Activated CD8-positive, alpha-beta memory T cell treated with anti-CD3 and anti-CD28 coated beads, Interleukin-2, amount 10 ng/mL, durations not matched to agents 7 days and 5 days (primary cell): ENCODE measurements at regions of chr2 and their contacts with region 1.

Region 1: DNA sequence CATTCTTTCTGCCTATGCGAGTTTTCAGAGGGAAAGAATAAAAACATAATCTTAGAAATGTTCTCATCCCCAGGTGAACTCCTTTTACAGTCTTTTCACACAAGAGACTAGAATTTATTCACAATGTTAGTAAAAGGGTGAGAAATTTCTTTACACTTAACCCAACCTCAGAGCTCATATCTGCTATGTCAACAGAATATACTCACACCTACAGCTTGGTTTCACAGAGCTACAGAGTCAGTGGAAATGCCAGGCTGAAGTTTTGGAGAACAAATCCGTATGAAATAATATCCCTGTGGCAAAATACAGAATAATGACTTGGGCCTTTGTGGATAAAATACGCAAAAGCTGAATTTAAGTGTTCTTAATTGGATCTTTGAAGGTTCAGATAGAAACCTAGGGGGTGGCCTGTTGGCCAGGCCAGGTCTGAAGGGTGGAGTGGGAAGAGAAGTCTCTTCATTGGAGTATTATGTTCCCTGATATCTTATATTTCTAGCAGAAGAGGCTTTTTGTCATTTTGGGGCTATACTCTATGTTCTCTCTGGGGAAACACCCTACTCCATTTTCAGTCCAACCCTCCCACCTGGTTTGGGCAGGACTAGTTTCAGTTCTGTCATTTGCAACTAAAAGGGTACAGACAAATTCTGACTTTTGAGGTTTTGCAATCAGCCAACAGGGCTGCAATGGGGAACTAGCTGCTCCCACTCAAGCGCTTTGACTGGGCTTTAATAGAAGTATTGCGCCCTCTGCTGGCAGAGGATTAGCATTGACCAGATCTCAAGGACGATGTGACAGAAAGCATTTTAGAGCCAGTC is 25.7 kb downstream of the FBXO48 start:
- DNase-seq: peak; percentile 94
- ATAC-seq: peak; percentile 96
- H3K4me3 Mint-ChIP-seq: no peak overlapping the region
- H3K27ac Mint-ChIP-seq: peak overlapping the region; percentile 84
- H3K4me1 Mint-ChIP-seq: peaks cover 23% of the 10 kb centered on the region
- H3K27me3 Mint-ChIP-seq: peaks cover 6% of the 10 kb centered on the region

Region 2: GRCh38 chr2:68295516-68295915 is 145.9 kb before region 1 on chr2:
- CTCF ChIA-PET with region 1: interaction called, 14 read pairs
- DNase-seq: no peak
- ATAC-seq: no peak
- H3K4me3 Mint-ChIP-seq: no peak overlapping the region
- H3K27ac Mint-ChIP-seq: no peak overlapping the region
- H3K4me1 Mint-ChIP-seq: peaks cover 5% of the 10 kb centered on the region
- H3K27me3 Mint-ChIP-seq: peaks cover 15% of the 10 kb centered on the region

Region 3: GRCh38 chr2:68362069-68362468 is 79.3 kb before region 1 on chr2:
- CTCF ChIA-PET with region 1: interaction called, 77 read pairs
- DNase-seq: peak; percentile 87
- ATAC-seq: peak; percentile 81
- H3K4me3 Mint-ChIP-seq: peak overlapping the region; percentile 48
- H3K27ac Mint-ChIP-seq: peak overlapping the region; percentile 79
- H3K4me1 Mint-ChIP-seq: peaks cover 38% of the 10 kb centered on the region
- H3K27me3 Mint-ChIP-seq: no peaks in the 10 kb centered on the region

Region 4: GRCh38 chr2:68371581-68371980 is 69.8 kb before region 1 on chr2:
- CTCF ChIA-PET with region 1: interaction called, 18 read pairs
- DNase-seq: no peak
- ATAC-seq: peak; percentile 82
- H3K4me3 Mint-ChIP-seq: peak overlapping the region; percentile 17
- H3K27ac Mint-ChIP-seq: peak overlapping the region; percentile 38
- H3K4me1 Mint-ChIP-seq: peaks cover 63% of the 10 kb centered on the region
- H3K27me3 Mint-ChIP-seq: no peaks in the 10 kb centered on the region

Region 5: DNA sequence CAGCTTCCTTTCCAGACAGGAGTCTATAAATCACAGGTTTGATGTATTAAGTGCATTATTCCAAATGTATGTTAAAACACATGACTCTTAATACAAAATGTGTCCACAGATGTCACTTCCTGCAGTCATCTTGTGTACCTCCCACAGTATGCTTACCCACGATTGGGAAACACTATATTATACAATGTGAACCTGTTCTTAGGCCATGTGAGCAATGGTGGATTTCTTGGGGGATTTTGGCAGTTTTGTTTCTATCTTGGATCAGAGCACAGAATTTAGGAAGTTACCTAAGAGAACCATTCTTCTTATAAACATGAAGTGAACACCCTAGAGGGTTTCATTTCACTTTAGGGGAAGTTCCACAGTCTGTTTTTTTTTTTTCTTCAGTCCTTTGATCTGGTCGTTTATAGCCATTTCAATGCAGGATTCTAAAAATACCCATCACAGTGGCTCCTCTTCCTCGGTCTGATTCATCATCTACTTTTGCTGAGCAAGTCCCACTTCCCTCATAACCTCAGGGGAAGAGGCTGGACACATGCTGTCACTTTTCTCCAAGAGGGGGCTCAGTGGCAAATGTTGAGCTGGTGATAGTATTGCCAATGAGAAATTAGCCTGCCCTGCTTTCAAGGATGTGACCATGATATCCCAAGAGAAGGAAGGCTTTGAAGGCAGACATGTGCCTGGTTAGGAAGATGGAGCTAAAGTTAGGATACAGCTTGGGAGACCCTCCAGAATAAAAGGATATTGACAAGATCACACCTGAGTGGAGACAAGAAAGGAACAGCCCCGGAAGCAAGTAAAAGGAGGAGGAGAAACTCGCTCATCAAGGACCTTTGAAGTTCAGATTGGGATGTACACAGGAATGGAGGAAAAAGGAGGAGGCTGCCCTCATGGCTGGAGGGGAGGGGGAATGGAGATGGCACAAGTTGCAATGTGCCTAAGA is 53.7 kb before region 1 on chr2:
- CTCF ChIA-PET with region 1: interaction called, 11 read pairs
- DNase-seq: no peak
- ATAC-seq: peak; percentile 33
- H3K4me3 Mint-ChIP-seq: peak overlapping the region; percentile 17
- H3K27ac Mint-ChIP-seq: peak overlapping the region; percentile 81
- H3K4me1 Mint-ChIP-seq: peaks cover 56% of the 10 kb centered on the region
- H3K27me3 Mint-ChIP-seq: peaks cover 3% of the 10 kb centered on the region

Region 6: DNA sequence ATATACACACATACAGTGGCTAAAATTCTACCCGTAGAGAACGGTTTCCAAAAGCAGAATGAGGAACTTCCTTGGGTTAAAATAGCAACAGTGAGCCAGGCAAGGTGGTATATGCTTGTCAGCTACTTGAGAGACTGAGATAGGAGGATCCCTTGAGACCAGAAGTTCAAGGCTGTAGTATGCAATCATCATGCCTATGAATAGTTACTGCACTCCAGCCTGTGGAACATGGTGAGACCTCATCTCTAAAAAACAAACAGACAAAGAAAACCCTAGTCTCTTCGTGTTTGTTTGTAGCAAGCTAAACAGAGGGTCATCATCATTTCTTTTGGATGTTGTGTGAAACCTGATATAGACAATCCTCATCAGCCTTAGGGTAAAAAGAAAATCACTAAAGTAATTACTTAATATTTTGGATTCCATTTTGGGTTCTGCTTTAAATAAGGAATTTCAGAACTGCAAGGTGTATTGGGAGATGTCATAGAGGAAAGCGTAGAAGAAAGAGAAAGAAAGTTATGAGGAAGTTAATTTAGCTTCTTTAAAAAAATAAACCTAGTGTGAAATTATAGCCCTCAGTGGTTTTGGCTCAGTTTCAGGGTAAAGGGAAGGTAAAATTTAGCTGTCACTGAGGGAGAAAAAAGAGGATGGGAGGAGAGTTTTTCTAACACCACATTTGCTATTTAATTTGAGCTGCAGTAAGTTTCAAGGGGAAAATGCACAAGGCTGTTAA is 29.8 kb before region 1 on chr2:
- CTCF ChIA-PET with region 1: interaction called, 14 read pairs
- DNase-seq: no peak
- ATAC-seq: no peak
- H3K4me3 Mint-ChIP-seq: peak overlapping the region; percentile 8
- H3K27ac Mint-ChIP-seq: peak overlapping the region; percentile 58
- H3K4me1 Mint-ChIP-seq: peaks cover 23% of the 10 kb centered on the region
- H3K27me3 Mint-ChIP-seq: peaks cover 5% of the 10 kb centered on the region

Region 7: GRCh38 chr2:68423966-68424650 is 17.3 kb before region 1 on chr2:
- CTCF ChIA-PET with region 1: interaction called, 44 read pairs
- DNase-seq: no peak
- ATAC-seq: peak; percentile 85
- H3K4me3 Mint-ChIP-seq: no peak overlapping the region
- H3K27ac Mint-ChIP-seq: no peak overlapping the region
- H3K4me1 Mint-ChIP-seq: peaks cover 42% of the 10 kb centered on the region
- H3K27me3 Mint-ChIP-seq: no peaks in the 10 kb centered on the region

Region 8: GRCh38 chr2:68569604-68570003 is 128.2 kb after region 1 on chr2:
- CTCF ChIA-PET with region 1: no interaction called
- DNase-seq: no peak
- ATAC-seq: no peak
- H3K4me3 Mint-ChIP-seq: no peak overlapping the region
- H3K27ac Mint-ChIP-seq: no peak overlapping the region
- H3K4me1 Mint-ChIP-seq: no peaks in the 10 kb centered on the region
- H3K27me3 Mint-ChIP-seq: no peaks in the 10 kb centered on the region